Mammary epithelial cell (primary cell): ENCODE measurements at regions of chr9 and their contacts with region 1.

Region 1: GRCh38 chr9:87324613-87325194 is 173.0 kb upstream of the DAPK1 start:
- DNase-seq: peak; percentile 45
- H3K4me3 ChIP-seq: no peak overlapping the region
- H3K27ac ChIP-seq: no peak overlapping the region
- H3K4me1 ChIP-seq: peaks cover 10% of the 10 kb centered on the region
- H3K27me3 ChIP-seq: no peaks in the 10 kb centered on the region
- CTCF ChIP-seq: peak; percentile 54 to 68

Region 2: DNA sequence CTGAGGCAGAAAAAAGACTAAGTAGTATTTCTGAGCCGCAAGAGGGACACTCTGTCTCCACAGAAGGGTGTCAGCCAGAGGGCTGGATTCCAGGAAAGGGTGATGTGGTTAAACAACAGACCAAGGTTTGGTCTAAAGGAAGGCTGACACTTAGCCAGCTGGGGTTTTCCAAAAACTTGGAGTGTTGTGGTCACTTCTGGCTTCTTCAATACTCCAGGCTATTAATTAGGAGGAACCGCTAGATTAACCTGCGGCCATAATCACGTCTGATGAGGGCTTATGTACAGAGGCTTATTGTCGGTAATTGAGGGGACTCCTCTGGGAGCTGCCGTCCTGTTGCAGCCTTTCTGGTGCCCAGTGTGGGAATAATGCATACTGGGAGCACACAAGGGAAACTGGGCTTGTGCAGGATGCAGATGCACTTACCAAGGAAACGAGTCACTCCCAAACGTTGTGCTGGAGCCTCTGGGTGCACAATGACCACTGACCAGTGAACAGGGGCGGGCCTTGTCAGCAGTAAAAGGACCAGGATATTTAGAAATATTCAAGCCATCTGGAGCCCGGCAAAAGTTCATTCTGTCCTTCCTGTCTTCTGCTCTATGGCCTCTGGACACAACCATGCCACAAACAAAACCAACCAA is 900.3 kb before region 1 on chr9:
- CTCF ChIA-PET with region 1: no interaction called
- dilution Hi-C with region 1: no loop called
- in situ Hi-C with region 1: loop called (anchors 10 kb)
- intact Hi-C with region 1: no loop called
- DNase-seq: no peak
- H3K4me3 ChIP-seq: no peak overlapping the region
- H3K27ac ChIP-seq: no peak overlapping the region
- H3K4me1 ChIP-seq: peaks cover 6% of the 10 kb centered on the region
- H3K27me3 ChIP-seq: no peaks in the 10 kb centered on the region
- CTCF ChIP-seq: no peak

Region 3: DNA sequence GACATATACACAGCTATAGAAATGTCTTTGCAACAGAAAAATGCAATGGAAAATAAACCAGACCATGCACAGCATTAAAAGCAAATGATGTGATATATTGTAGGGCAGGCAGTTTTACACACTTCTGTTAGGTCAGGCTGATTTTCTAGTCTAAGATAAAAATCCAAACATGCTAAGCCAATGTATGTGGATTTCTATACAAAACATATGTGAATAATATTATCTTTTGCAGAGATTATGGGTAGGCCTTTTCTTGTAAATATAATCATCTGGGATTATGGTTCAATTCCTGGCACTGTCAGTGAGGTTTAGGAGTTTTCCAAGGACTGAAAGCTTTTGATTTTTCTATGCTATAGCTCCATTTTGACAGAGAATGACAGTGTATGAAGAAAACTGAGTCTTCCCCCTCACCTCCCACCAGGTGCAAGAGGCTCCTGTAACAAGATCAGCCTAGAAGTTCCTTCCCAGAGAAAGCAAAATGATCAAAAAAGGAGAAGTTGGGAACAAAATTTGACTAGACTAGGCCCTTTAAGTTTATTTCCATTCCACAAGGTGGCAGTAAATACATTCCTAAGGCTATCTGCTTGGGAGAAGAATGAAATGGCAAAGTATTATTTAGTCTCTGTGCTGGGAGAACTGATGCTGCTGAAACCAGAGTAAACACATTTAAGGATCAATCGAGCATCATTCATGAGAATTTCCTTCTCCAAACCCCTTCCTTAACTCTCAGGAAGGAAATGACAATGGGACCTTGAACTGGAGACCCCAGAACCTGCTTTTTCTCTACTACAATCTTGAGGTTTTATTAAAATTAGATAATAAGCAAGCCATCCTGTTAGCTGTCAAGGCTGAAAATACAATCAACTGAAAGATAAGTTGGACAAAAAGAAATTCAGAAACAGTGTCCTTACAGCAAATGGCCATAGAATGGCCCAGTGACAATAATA is 837.5 kb before region 1 on chr9:
- CTCF ChIA-PET with region 1: no interaction called
- dilution Hi-C with region 1: no loop called
- in situ Hi-C with region 1: loop called (anchors 5 kb)
- intact Hi-C with region 1: loop called (anchors 1 kb)
- DNase-seq: peak; percentile 40
- H3K4me3 ChIP-seq: no peak overlapping the region
- H3K27ac ChIP-seq: no peak overlapping the region
- H3K4me1 ChIP-seq: peaks cover 8% of the 10 kb centered on the region
- H3K27me3 ChIP-seq: no peaks in the 10 kb centered on the region
- CTCF ChIP-seq: peak; percentile 31 to 69

Region 4: DNA sequence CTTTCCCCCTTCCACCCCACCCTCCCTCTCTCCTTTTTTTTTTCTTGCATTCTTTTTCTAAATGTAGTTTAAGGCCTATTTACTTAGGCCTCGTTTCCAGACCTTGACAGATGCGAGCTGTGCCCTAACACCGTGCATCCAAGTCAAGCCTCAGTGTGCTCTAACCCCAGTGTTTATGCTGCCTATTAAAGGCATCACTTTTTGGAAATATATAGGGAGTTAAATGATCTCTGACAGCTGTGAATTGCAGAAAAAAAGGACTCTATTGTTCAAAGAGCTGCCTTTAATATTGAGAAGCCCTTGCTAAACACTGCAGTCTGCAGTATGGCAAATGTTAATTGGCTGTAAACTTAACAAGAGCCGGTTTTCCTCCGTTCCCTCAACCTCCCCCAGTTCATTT is 700.1 kb before region 1 on chr9:
- CTCF ChIA-PET with region 1: no interaction called
- dilution Hi-C with region 1: no loop called
- in situ Hi-C with region 1: loop called in 1 of 2 experiments (anchors 10 kb)
- intact Hi-C with region 1: loop called (anchors 5 kb)
- DNase-seq: no peak
- H3K4me3 ChIP-seq: no peak overlapping the region
- H3K27ac ChIP-seq: no peak overlapping the region
- H3K4me1 ChIP-seq: no peaks in the 10 kb centered on the region
- H3K27me3 ChIP-seq: no peaks in the 10 kb centered on the region
- CTCF ChIP-seq: no peak

Region 5: GRCh38 chr9:86821006-86821845 is 503.5 kb before region 1 on chr9:
- CTCF ChIA-PET with region 1: no interaction called
- dilution Hi-C with region 1: no loop called
- in situ Hi-C with region 1: no loop called
- intact Hi-C with region 1: no loop called
- DNase-seq: no peak
- H3K4me3 ChIP-seq: no peak overlapping the region
- H3K27ac ChIP-seq: no peak overlapping the region
- H3K4me1 ChIP-seq: no peaks in the 10 kb centered on the region
- H3K27me3 ChIP-seq: no peaks in the 10 kb centered on the region
- CTCF ChIP-seq: no peak

Region 6: DNA sequence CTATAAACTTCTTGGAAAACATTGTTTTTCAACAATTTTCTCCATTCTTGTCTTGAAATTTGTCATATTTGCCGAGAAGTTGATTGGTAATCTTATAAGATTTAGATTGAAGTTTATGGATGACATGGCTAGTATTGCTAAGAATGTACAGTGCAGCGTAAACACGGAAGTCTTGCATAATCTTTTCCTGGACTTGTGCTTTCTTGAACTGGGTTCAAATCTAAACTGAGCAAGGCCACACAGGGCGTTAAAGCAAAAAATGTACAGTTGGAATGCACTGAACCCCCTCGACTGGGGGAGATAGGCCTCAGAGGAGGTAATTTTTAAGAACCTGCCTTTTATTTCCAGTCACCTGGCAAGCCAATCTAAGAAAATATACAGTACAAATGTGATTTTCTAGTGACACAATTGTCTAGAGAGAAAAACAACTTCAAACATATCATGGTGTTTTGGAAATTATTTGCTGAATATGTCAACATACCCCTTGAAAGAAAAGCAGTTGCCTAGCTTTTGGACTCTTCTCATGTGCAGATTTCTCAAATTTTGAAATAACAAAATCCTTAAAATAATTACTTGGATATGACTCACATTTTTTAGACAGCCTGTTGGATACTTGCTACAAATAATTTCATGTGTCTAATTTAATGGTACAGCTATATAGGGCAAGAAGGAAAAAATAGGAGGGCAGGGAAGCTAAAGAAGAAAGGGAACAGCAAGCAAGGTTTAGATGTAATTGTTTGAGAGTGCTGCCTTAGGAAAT is 358.9 kb before region 1 on chr9:
- CTCF ChIA-PET with region 1: no interaction called
- dilution Hi-C with region 1: no loop called
- in situ Hi-C with region 1: loop called in 1 of 2 experiments (anchors 25 kb)
- intact Hi-C with region 1: no loop called
- DNase-seq: no peak
- H3K4me3 ChIP-seq: no peak overlapping the region
- H3K27ac ChIP-seq: no peak overlapping the region
- H3K4me1 ChIP-seq: peaks cover 12% of the 10 kb centered on the region
- H3K27me3 ChIP-seq: no peaks in the 10 kb centered on the region
- CTCF ChIP-seq: no peak

Region 7: DNA sequence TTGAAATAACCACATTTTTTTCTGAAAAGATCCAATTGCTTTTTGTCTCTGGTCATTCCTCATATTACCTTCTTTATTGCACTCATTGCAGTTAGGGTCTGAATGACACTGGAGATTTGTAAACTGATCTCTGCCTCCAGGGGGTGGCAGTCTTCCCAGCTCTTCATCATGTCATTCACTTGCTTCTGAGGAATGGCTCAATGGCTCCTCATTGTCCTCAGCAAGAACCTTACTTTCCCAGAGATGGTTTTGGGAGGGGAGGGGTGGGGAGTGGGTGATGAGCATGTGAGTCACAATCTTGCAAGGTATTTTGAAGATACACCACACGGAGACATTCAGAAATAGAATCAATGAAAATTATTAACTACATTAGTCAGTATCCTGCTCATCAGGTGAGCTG is 217.6 kb before region 1 on chr9:
- CTCF ChIA-PET with region 1: no interaction called
- dilution Hi-C with region 1: no loop called
- in situ Hi-C with region 1: no loop called
- intact Hi-C with region 1: loop called (anchors 1 kb)
- DNase-seq: peak; percentile 93
- H3K4me3 ChIP-seq: no peak overlapping the region
- H3K27ac ChIP-seq: peak overlapping the region; percentile 84
- H3K4me1 ChIP-seq: peaks cover 37% of the 10 kb centered on the region
- H3K27me3 ChIP-seq: no peaks in the 10 kb centered on the region
- CTCF ChIP-seq: peak in 1 of 2 donors; percentile 39